ENCODE measurements at regions of chr16 and their contacts with region 1.

Region 1: GRCh38 chr16:76768948-76769347 is 422.0 kb upstream of the MON1B start:
- DNase-seq: no peak
- ATAC-seq: no peak
- H3K4me3 ChIP-seq: no peak overlapping the region
- H3K27ac ChIP-seq: no peak overlapping the region
- H3K4me1 ChIP-seq: no peaks in the 10 kb centered on the region
- H3K27me3 ChIP-seq: no peaks in the 10 kb centered on the region
- CTCF ChIP-seq: no peak
- POLR2A ChIP-seq: no peak
- RAD21 ChIP-seq: no peak

Region 2: GRCh38 chr16:76653390-76654026 is 115.4 kb before region 1 on chr16:
- CTCF ChIA-PET with region 1: no interaction called
- POLR2A ChIA-PET with region 1: no interaction called
- dilution Hi-C with region 1: no loop called
- in situ Hi-C with region 1: no loop called
- intact Hi-C with region 1: no loop called
- DNase-seq: peak; percentile 28
- ATAC-seq: no peak
- H3K4me3 ChIP-seq: no peak overlapping the region
- H3K27ac ChIP-seq: no peak overlapping the region
- H3K4me1 ChIP-seq: no peaks in the 10 kb centered on the region
- H3K27me3 ChIP-seq: no peaks in the 10 kb centered on the region
- CTCF ChIP-seq: peak; percentile 57
- POLR2A ChIP-seq: no peak
- RAD21 ChIP-seq: peak; percentile 66

Region 3: DNA sequence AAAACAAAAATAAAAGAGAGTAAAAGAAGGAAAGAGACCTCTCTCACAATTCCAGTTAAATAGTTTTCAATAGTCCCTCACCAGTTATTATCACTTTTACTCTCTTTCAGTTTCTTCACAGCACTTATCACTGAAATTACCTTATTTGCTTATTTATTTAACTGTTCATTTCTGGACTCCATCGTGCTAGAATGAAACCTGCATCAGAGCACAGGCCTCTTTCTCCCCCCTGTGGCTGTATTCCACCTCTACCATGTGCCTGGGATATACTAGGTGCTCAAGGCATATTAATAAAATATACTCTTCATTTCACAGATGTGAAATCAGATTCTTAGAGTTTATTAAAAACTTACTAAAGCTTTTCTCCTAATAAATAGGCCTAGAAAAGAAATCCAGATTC is 113.1 kb after region 1 on chr16:
- CTCF ChIA-PET with region 1: interaction called, 10 read pairs
- POLR2A ChIA-PET with region 1: no interaction called
- dilution Hi-C with region 1: no loop called
- in situ Hi-C with region 1: no loop called
- intact Hi-C with region 1: no loop called
- DNase-seq: no peak
- ATAC-seq: no peak
- H3K4me3 ChIP-seq: no peak overlapping the region
- H3K27ac ChIP-seq: no peak overlapping the region
- H3K4me1 ChIP-seq: no peaks in the 10 kb centered on the region
- H3K27me3 ChIP-seq: no peaks in the 10 kb centered on the region
- CTCF ChIP-seq: no peak
- POLR2A ChIP-seq: no peak
- RAD21 ChIP-seq: no peak

Measured in IMR-90 (cell line).